ENCODE measurements at regions of chr1 and their contacts with region 1.

Region 1: GRCh38 chr1:117654493-117655219 is 48.8 kb downstream of the TENT5C start:
- DNase-seq: no peak
- H3K4me3 Mint-ChIP-seq: no peak overlapping the region
- H3K27ac Mint-ChIP-seq: peak overlapping the region; percentile 78
- H3K4me1 Mint-ChIP-seq: peaks cover 78% of the 10 kb centered on the region
- H3K27me3 Mint-ChIP-seq: peaks cover 2% of the 10 kb centered on the region

Region 2: DNA sequence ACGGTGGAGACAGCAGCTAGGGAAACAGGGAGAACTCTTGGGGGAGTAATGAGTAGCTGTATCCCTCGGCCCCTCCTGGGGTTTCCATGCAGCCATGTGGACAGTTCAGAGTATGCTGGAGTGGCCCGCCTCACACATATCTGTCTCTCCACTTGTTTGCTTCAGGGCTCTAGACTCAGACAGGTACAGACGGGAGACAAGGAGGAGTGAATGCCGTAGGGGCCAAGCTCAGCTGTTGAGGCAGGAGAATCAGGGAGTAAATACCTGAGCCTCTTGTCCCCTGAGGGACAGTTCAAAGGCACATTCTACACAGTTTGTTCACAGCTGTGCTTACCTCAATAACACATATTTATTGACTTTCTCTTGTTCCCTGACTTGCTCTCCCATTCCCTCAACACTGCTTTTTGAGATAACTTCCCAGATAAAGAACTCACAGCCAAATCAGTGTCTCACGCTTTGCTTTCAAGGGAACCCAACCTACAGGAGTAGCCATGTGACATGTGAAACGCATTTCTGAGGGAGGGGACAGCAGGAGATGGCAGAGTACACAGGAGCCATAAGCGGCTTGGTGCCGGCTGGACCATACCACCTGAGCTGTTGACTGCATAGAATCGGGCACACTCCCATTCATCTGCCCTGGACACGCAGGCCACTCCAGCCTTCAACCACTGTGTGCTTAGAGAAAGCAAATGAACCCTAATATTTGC is 752.5 kb before region 1 on chr1:
- CTCF ChIA-PET with region 1: no interaction called
- POLR2A ChIA-PET with region 1: no interaction called
- intact Hi-C with region 1: no loop called
- DNase-seq: no peak
- H3K4me3 Mint-ChIP-seq: no peak overlapping the region
- H3K27ac Mint-ChIP-seq: no peak overlapping the region
- H3K4me1 Mint-ChIP-seq: no peaks in the 10 kb centered on the region
- H3K27me3 Mint-ChIP-seq: no peaks in the 10 kb centered on the region

Region 3: DNA sequence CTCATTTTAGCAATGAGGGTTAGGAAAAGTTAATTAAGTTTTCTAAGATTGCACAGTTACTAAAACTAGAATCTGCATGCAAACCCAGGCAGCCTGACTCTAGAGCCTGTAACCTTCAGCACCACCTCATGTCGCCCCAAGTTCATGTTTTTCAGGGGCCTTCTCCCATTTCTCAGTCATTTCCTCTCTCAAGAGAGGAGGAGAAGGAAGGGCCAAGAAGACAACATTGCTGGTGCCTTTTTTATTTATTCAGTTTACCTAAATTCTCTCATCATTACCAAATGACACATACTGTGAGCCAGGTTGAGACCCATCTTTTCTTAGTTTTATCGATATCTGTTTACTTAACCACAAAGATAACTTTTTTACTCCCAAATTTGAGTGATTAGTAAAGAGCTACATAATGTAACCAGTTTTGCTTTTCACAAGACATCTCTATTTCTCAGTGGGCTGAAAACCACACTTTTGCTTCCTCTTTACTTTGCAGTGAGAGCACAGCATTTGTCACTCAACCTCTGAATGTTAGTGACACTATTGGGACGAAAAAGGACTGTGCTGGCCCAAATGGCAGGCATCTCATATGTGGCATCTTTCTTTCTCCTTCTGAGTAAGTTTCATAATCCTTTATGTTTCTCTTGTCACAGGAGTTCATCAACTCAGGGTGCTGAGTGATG is 653.3 kb before region 1 on chr1 and contains the start of gene CD101:
- CTCF ChIA-PET with region 1: no interaction called
- POLR2A ChIA-PET with region 1: no interaction called
- intact Hi-C with region 1: no loop called
- DNase-seq: peak; percentile 66
- H3K4me3 Mint-ChIP-seq: no peak within 1 kb of the TSS
- H3K27ac Mint-ChIP-seq: peak within 1 kb of the TSS; percentile 26
- H3K4me1 Mint-ChIP-seq: peaks cover 31% of the 10 kb centered on the region
- H3K27me3 Mint-ChIP-seq: no peaks in the 10 kb centered on the region
- total RNA-seq, gene CD101: 0.14 to 0.19 TPM

Region 4: GRCh38 chr1:117077267-117077666 is 577.4 kb before region 1 on chr1:
- CTCF ChIA-PET with region 1: no interaction called
- POLR2A ChIA-PET with region 1: interaction called, 3 read pairs
- intact Hi-C with region 1: loop called (anchors 2 kb)
- DNase-seq: peak; percentile 79
- H3K4me3 Mint-ChIP-seq: no peak overlapping the region
- H3K27ac Mint-ChIP-seq: peak overlapping the region; percentile 71
- H3K4me1 Mint-ChIP-seq: peaks cover 30% of the 10 kb centered on the region
- H3K27me3 Mint-ChIP-seq: no peaks in the 10 kb centered on the region

Region 5: DNA sequence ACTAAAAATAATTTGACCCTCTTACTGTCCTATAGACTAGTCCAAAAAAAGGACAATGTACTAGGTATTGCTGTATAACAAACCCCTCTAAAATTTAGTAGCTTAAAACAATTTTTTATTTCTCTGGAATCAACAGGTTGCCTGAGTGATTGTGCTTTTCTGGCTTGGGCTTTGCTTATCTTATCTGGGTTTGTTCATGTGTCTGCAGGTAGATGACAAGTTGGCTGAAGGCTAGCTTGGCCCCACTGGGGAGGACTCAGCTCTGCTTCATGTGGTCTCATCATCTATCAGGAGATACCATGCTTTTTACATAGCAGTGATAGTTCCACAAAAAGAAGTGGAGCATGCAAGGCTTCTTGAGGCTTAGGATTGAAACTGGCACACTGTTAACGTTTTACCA is 173.2 kb before region 1 on chr1:
- CTCF ChIA-PET with region 1: no interaction called
- POLR2A ChIA-PET with region 1: no interaction called
- intact Hi-C with region 1: no loop called
- DNase-seq: no peak
- H3K4me3 Mint-ChIP-seq: no peak overlapping the region
- H3K27ac Mint-ChIP-seq: no peak overlapping the region
- H3K4me1 Mint-ChIP-seq: no peaks in the 10 kb centered on the region
- H3K27me3 Mint-ChIP-seq: no peaks in the 10 kb centered on the region

Region 6: DNA sequence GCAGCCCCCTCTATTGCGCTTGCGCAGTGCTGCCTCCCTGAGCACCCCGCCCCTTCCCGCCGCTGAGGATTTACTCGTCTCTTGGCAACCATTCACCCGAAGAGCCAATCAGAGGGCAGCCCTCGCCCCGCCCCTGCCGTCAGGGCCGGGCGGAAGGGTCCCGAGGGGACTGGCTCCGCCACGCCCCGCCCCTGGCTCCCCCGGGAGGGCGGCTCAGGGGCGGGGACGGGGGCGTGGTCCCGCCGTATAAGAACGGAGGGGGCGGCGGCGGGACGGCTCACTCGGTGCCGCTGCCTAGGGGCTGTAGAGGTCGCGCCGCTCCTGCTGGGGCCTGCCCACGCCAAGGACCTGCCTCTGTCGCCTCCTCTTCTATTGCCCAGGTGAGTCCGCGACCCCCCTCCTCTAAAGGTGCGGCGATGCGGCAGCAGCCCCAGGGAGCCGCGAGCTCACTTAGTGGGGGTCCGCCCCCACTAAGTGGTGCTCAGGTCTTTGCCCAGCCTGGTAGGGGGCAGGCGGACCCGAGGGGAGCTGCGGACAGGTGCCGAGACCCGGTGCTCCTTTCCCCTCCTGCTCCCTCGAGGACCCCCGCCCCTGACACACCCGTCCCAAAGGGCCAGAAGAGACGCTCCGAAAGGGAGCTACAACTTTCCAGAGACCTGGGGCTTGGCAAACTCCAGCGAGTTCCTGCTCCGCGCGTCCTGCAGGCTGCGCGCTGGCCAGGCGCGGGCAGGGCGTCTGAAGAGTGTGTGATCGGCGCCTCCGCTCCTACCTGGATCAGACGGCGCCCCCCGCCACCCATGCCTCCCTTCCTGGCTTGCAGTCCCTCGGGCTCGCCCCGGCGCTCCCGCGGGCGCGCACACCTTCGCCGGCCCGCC is 48.6 kb before region 1 on chr1 and contains the start of gene TENT5C:
- CTCF ChIA-PET with region 1: interaction called, 6 read pairs
- POLR2A ChIA-PET with region 1: interaction called, 83 read pairs
- intact Hi-C with region 1: loop called (anchors 1 kb)
- DNase-seq: peak; percentile 99
- H3K4me3 Mint-ChIP-seq: peak within 1 kb of the TSS; percentile 91
- H3K27ac Mint-ChIP-seq: peak within 1 kb of the TSS; percentile 94
- H3K4me1 Mint-ChIP-seq: peaks cover 41% of the 10 kb centered on the region
- H3K27me3 Mint-ChIP-seq: no peaks in the 10 kb centered on the region
- total RNA-seq, gene TENT5C: 13.8 to 14.0 TPM

Region 7: DNA sequence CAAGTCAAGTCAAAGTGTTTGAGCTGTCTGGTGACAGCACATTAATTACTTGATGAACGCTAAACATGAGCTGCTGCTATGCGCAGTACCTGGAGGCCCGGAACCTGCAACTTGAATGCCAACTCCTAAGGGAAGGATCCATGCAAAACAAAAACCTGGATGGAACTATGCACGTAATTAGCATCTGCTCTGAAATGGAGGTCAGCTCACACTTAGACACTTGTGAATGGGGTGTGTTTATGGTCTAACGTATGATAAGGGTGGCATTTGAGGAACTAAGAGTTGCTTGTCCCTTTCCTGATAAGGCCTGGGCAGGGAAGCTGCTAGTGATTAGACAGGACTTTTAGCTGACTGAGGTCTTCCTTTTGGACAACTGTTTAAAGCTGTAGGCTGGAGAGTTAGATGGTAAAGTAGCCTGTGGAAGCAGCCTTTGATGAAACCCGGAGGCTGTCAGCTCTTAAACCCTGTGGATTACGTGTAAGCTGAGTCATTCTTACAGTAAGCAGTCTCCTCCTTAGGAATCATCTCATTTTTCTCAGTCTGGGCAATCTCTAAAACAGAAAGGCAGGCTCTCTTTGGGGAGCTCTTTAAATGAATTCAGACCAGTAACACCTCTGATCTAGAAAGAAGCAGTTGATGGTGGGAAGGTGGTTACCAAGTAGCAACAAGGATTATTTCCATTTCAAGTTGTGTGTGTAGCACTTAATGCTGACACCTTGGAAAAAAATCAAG is 42.0 kb before region 1 on chr1:
- CTCF ChIA-PET with region 1: interaction called, 6 read pairs
- POLR2A ChIA-PET with region 1: interaction called, 83 read pairs
- intact Hi-C with region 1: no loop called
- DNase-seq: peak; percentile 23
- H3K4me3 Mint-ChIP-seq: no peak overlapping the region
- H3K27ac Mint-ChIP-seq: peak overlapping the region; percentile 64
- H3K4me1 Mint-ChIP-seq: peaks cover 86% of the 10 kb centered on the region
- H3K27me3 Mint-ChIP-seq: no peaks in the 10 kb centered on the region

Region 8: GRCh38 chr1:117622726-117623125 is 31.9 kb before region 1 on chr1:
- CTCF ChIA-PET with region 1: interaction called, 7 read pairs
- POLR2A ChIA-PET with region 1: interaction called, 20 read pairs
- intact Hi-C with region 1: loop called (anchors 1 kb)
- DNase-seq: no peak
- H3K4me3 Mint-ChIP-seq: no peak overlapping the region
- H3K27ac Mint-ChIP-seq: peak overlapping the region; percentile 26
- H3K4me1 Mint-ChIP-seq: peaks cover 38% of the 10 kb centered on the region
- H3K27me3 Mint-ChIP-seq: no peaks in the 10 kb centered on the region

Region 9: DNA sequence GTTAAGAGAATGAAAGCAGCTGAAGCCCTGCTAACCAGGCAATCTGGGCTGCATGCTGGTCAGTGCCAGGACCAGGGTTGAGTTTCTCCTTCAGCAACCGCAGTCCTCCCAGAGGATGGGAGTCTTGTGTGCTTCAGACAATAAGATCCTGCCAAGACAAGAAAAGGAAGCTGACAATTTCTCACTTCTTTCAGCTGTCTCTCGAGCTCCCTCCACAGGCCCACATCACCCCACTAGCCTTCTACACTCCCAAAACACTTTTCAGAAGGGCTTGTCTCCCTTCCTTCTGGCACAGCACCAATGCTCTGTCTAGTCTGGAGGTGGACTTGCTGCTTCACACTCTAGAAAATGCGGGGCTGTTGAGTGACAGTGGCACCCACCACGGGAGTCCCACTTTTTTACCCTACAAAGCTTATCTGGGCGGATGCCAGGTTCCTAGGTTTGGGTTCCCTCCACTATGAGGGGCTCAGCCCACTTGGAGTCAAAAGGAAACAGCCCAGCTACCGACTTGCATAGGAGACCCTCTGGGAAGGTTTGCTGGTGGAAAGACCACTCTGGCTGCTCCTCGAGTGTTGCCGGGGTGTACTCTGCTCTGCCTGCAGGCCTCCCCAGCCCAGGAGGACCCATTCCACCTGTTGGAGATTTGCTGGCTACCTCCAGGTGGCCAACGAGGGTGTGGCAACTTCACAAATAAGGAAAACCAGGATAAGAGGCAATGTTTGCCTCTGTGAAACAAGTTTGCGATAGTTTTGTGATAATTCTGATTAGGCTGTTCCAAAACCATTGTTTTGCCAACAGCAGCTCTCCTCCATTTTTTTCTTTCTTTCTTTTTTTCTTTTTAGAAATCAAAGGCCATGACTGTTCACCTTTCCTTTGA is 20.1 kb after region 1 on chr1:
- CTCF ChIA-PET with region 1: interaction called, 20 read pairs
- POLR2A ChIA-PET with region 1: no interaction called
- intact Hi-C with region 1: no loop called
- DNase-seq: peak; percentile 68
- H3K4me3 Mint-ChIP-seq: no peak overlapping the region
- H3K27ac Mint-ChIP-seq: no peak overlapping the region
- H3K4me1 Mint-ChIP-seq: peaks cover 16% of the 10 kb centered on the region
- H3K27me3 Mint-ChIP-seq: no peaks in the 10 kb centered on the region

Measured in activated CD4-positive, alpha-beta memory T cell treated with anti-CD3 and anti-CD28 coated beads for 36 hours (primary cell).